ENCODE measurements at regions of chr22 and their contacts with region 1.

Region 1: DNA sequence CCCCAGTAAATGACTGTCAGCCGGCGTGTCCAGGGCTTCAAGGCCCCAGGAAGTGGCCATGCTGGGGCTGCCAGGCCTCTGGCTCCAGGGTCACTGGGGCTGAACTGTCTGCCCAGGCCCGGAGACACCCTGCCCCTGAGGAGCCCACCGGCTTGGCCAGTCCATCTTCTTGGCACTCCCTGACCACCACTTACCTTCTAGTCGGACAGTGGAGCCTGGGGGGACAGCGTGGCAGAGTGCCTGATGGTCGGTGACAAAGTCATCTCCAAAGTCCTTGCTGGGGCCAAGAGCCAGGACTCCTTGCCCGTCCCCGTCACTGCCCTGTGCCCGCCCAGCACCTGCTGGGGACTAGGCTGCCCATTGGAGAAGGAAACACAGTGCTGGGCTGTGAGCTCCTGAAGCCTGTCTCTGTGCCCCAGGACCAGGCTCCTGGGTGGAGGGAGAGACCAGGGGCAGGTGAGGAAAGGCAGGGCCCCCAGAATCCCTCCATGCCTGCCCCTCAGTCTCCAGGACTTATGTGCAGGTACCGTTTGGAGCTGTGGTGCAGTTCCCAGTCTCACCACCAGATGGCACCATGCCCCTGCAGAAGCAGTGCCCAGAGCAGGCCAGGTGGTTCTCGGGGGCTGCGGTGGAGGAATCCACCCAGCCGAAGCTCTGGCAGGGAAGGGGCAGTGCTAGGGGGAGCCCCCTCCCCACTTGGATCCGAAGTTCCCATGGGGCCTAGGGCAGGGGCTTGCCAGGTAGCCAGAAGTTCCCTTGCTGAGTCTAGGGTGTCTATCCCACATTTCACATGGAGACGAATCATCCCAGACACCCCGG is 6.0 kb upstream of the CCDC188 start:
- DNase-seq: peak; percentile 95
- ATAC-seq: peak; percentile 94
- H3K4me3 Mint-ChIP-seq: no peak overlapping the region
- H3K27ac Mint-ChIP-seq: no peak overlapping the region
- H3K4me1 Mint-ChIP-seq: no peaks in the 10 kb centered on the region
- H3K27me3 Mint-ChIP-seq: no peaks in the 10 kb centered on the region
- CTCF ChIP-seq: peak; percentile 99

Region 2: GRCh38 chr22:20174785-20175596 is 18.2 kb after region 1 on chr22:
- CTCF ChIA-PET with region 1: no interaction called
- POLR2A ChIA-PET with region 1: no interaction called
- intact Hi-C with region 1: no loop called
- DNase-seq: no peak
- ATAC-seq: no peak
- H3K4me3 Mint-ChIP-seq: no peak overlapping the region
- H3K27ac Mint-ChIP-seq: no peak overlapping the region
- H3K4me1 Mint-ChIP-seq: no peaks in the 10 kb centered on the region
- H3K27me3 Mint-ChIP-seq: no peaks in the 10 kb centered on the region
- CTCF ChIP-seq: no peak

Region 3: DNA sequence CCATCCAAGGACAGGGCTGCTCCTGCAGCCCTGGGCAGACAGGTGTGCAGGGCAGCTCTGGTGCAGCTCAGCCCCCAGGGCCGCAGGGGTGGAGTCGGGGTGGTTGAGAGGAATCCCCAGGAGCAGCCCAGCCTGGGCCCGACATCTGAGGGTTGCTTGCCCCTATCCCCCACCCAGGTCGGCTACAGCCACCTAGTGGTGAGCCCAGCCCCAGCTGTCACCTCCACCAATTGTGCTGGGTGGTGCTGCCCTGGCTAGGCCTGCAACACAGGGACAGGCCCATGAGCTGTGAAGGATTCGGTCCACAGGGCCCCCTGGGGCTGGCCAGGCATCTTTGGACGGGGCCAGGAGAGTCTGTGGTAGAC is 81.7 kb after region 1 on chr22:
- CTCF ChIA-PET with region 1: interaction called, 26 read pairs
- POLR2A ChIA-PET with region 1: no interaction called
- intact Hi-C with region 1: no loop called
- DNase-seq: peak; percentile 80
- ATAC-seq: peak; percentile 83
- H3K4me3 Mint-ChIP-seq: peak overlapping the region; percentile 29
- H3K27ac Mint-ChIP-seq: peak overlapping the region; percentile 82
- H3K4me1 Mint-ChIP-seq: peaks cover 28% of the 10 kb centered on the region
- H3K27me3 Mint-ChIP-seq: no peaks in the 10 kb centered on the region
- CTCF ChIP-seq: peak; percentile 50

Region 4: GRCh38 chr22:20243537-20244249 is 86.9 kb after region 1 on chr22:
- CTCF ChIA-PET with region 1: interaction called, 26 read pairs
- POLR2A ChIA-PET with region 1: no interaction called
- intact Hi-C with region 1: no loop called
- DNase-seq: peak; percentile 77
- ATAC-seq: peak; percentile 65
- H3K4me3 Mint-ChIP-seq: peak overlapping the region; percentile 52
- H3K27ac Mint-ChIP-seq: peak overlapping the region; percentile 95
- H3K4me1 Mint-ChIP-seq: peaks cover 49% of the 10 kb centered on the region
- H3K27me3 Mint-ChIP-seq: no peaks in the 10 kb centered on the region
- CTCF ChIP-seq: no peak

Region 5: GRCh38 chr22:20268279-20269012 is 111.6 kb after region 1 on chr22 and contains the start of gene RTN4R:
- CTCF ChIA-PET with region 1: interaction called, 4 read pairs
- POLR2A ChIA-PET with region 1: no interaction called
- intact Hi-C with region 1: loop called (anchors 5 kb)
- DNase-seq: peak; percentile 65
- ATAC-seq: peak; percentile 86
- H3K4me3 Mint-ChIP-seq: peak within 1 kb of the TSS; percentile 54
- H3K27ac Mint-ChIP-seq: no peak within 1 kb of the TSS
- H3K4me1 Mint-ChIP-seq: peaks cover 3% of the 10 kb centered on the region
- H3K27me3 Mint-ChIP-seq: no peaks in the 10 kb centered on the region
- CTCF ChIP-seq: peak; percentile 54
- total RNA-seq, gene RTN4R: 2.8 to 3.7 TPM

Region 6: DNA sequence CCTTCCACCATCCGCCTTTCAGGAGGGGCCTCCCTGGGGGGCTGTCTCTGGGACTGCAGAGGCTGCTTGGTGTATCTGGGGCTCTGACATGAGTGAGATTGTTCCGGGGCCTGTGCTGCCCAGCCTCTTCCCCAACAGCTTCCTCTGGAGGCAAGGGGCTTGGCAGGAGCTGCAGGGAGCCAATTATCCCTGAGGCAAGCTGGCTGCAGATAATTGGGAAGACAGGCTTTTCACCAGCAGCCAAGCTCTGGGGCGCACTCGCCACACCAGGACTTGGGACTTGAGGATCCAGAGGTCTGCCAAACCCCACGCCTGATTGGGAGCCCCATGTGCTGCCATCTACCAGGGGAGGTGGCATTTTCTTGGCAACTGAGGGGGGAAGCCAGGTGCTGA is 126.8 kb after region 1 on chr22:
- CTCF ChIA-PET with region 1: interaction called, 16 read pairs
- POLR2A ChIA-PET with region 1: no interaction called
- intact Hi-C with region 1: loop called (anchors 2 kb)
- DNase-seq: no peak
- ATAC-seq: no peak
- H3K4me3 Mint-ChIP-seq: no peak overlapping the region
- H3K27ac Mint-ChIP-seq: no peak overlapping the region
- H3K4me1 Mint-ChIP-seq: peaks cover 3% of the 10 kb centered on the region
- H3K27me3 Mint-ChIP-seq: no peaks in the 10 kb centered on the region
- CTCF ChIP-seq: no peak